Common myeloid progenitor, CD34-positive (primary cell): ENCODE measurements at regions of chr18 and their contacts with region 1.

Region 1: DNA sequence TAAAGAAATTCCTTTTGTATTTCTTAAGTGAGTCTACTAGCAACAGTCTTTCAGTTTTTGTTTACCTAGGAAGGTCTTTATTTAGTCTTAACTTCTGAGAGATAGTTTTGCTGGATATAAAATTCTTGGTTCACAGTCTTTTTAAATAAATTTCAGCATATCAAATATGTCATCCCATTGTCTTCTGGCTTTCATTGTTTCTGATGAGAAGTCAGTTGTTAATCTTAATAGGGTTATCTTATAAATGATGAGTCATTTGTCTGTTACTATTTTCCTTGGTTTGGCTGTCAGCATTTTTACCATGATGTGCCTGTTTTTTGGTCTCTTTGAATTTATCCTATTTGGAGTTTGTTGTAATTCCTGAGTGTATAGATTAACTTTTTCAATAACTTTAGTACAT is 129.3 kb downstream of the FAM210A start:
- DNase-seq: peak; percentile 40 to 72 (median 63)
- H3K4me3 ChIP-seq: no peak overlapping the region
- H3K27ac ChIP-seq: no peak overlapping the region
- H3K4me1 ChIP-seq: peaks cover 0 to 6% (median 2%) of the 10 kb centered on the region in 4 experiments
- H3K27me3 ChIP-seq: no peaks in the 10 kb centered on the region

Region 2: DNA sequence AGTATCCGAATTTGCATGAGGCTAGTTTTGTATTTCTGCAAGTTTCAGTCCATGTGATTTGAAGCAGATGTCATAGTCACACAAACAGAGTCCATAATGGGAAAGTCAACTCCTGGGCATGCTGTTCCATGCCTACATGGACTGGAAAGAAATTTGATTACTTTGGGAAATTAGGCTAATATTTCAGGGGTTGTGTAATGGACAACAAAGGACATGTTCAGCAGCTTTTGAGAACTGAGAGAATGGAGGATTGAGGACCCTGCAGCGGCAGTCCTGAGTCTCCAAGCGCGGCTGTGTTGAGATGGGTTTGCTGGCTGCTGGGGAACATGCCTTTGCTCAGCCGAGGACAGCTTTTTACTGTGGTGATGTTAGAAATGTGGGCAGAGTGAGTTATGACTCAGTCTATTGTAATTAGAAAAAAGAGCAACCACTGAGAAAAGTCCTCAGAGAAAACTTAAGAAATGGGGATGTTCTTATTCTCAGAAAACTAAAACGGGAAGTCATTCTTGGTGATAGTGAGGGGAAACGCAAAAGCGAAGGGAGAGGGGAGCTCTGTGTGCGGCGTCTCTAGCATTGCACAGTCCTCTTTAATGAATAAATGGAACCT is 19.9 kb before region 1 on chr18:
- CTCF ChIA-PET with region 1: interaction called, 14 read pairs
- POLR2A ChIA-PET with region 1: interaction called, 3 read pairs
- DNase-seq: peak; percentile 66 to 91 (median 88)
- H3K4me3 ChIP-seq: peak overlapping the region in 4 of 7 experiments; percentile 2 to 51 (median 28)
- H3K27ac ChIP-seq: no peak overlapping the region
- H3K4me1 ChIP-seq: peaks cover 13 to 56% (median 34%) of the 10 kb centered on the region in 4 experiments
- H3K27me3 ChIP-seq: no peaks in the 10 kb centered on the region